K562 (cell line): ENCODE measurements at regions of chr1 and their contacts with region 1.

Region 1: GRCh38 chr1:212455803-212456528 is 23.2 kb downstream of the NENF start:
- DNase-seq: peak; percentile 87 to 91 (median 88)
- ATAC-seq: peak; percentile 87
- H3K4me3 ChIP-seq: no peak overlapping the region
- H3K27ac ChIP-seq: no peak overlapping the region
- H3K4me1 ChIP-seq: peaks cover 0 to 5% of the 10 kb centered on the region in 2 experiments; a peak in 2 of 5 replicates
- H3K27me3 ChIP-seq: peaks cover 0 to 4% of the 10 kb centered on the region in 2 experiments; a peak in 1 of 5 replicates
- CTCF ChIP-seq: peak; percentile 95 to 99 (median 99)
- EP300 ChIP-seq: no peak
- POLR2A ChIP-seq: no peak
- RAD21 ChIP-seq: peak; percentile 99 to 100

Region 2: DNA sequence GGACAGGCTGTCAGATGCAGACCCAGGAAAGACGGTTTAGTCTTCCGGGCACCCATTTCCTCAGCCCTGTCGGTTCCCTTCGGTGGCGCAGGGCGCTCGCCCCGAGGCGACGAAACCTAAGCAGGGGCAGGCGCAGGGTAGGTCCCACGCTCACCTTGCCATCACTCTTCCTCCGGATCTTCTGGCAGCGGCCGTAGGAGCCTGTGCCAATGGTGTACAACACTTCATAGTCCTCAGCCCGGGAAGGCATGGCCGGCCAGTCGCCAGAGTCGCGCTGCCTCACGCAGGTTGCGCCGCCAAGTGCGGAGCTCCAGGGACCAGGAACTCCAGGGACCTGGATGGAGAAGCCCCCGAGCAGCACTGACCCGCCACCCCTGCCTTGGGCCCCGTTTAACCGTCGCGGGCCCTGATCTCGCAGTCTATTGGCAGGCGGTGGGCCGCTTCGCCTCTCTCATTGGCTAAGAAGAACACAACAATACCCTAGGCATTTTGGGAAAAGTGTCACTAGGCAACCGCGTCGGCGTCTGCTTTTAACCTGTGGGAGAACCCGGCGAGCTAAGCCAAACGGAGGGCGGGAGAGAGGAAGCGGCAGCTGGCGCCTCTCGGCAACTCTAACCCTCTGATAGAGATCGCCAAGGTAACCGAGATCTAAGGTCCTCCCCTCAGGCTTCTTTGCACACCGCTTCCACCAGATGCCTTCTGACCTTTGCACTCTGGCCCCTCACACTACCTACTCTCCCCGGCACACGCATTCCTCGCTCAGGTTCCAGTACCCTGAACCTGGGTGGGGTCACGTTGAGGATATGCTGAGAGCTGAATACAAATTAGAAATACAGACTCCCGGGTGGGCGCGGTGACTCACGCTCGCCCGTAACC is 780.5 kb before region 1 on chr1 and contains the start of gene NEK2:
- CTCF ChIA-PET with region 1: interaction called, 15 read pairs
- POLR2A ChIA-PET with region 1: interaction called, 10 read pairs
- in situ Hi-C with region 1: loop called (anchors 5 kb)
- intact Hi-C with region 1: loop called (anchors 1 kb)
- DNase-seq: peak; percentile 95 to 99 (median 95)
- ATAC-seq: peak; percentile 97
- H3K4me3 ChIP-seq: peak within 1 kb of the TSS; percentile 75
- H3K27ac ChIP-seq: peak within 1 kb of the TSS; percentile 88
- H3K4me1 ChIP-seq: peaks cover 10 to 16% of the 10 kb centered on the region in 2 experiments; a peak in 4 of 5 replicates
- H3K27me3 ChIP-seq: no peaks in the 10 kb centered on the region
- CTCF ChIP-seq: no peak
- EP300 ChIP-seq: peak; percentile 19; the same call in 1 of the 2 replicates
- POLR2A ChIP-seq: peak; percentile 90
- RAD21 ChIP-seq: 0 out of 4 replicates have a peak, but pooled peaks have one; percentile 9 to 17
- polyA plus RNA-seq, gene NEK2: 30.0 to 38.6 TPM

Region 3: GRCh38 chr1:211698161-211699026 is 757.6 kb before region 1 on chr1:
- CTCF ChIA-PET with region 1: no interaction called
- POLR2A ChIA-PET with region 1: no interaction called
- in situ Hi-C with region 1: no loop called
- intact Hi-C with region 1: loop called (anchors 5 kb)
- DNase-seq: peak; percentile 90 to 94 (median 92)
- ATAC-seq: peak; percentile 97
- H3K4me3 ChIP-seq: no peak overlapping the region
- H3K27ac ChIP-seq: no peak overlapping the region
- H3K4me1 ChIP-seq: peaks cover 12 to 13% of the 10 kb centered on the region in 2 experiments; a peak in 4 of 5 replicates
- H3K27me3 ChIP-seq: peaks cover 0 to 7% of the 10 kb centered on the region in 2 experiments; a peak in 1 of 5 replicates
- CTCF ChIP-seq: peak; percentile 99 to 100 (median 100)
- EP300 ChIP-seq: peak; percentile 31; the same call in 1 of the 2 replicates
- POLR2A ChIP-seq: no peak
- RAD21 ChIP-seq: peak; percentile 99

Region 4: DNA sequence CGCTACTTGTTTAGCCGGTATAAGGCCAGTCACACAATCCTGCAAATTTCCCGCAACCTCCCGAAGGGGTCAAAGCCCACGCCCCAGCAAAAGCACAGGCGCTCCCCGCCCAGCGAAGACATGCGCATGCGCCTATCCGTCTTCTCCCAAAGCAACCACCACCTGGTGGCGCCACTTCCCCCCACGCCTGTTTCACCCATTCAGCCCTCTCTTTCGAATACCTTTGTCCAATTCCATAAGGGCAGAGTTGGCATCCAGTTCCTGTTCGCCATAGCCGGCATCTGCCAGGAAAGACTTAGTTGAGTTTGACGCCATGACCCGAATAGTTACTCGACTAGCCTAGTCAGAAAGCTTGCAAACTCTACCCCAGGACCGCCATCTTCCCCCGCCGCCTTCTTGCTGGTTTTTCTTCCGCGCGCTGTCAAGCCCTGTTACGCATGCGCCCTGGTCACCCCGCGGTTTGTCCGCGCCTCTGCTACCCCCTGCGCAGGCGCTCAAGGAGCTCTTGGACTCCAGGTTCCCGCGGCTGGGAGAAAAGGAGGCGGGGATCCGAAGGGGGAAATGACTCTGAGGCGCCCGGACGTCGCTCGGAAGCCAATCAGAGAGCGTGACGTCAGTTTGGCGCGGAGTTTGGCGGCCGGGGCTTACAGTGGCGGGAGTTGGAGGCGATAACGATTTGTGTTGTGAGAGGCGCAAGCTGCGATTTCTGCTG is 420.7 kb before region 1 on chr1 and contains the starts of genes DTL and INTS7:
- CTCF ChIA-PET with region 1: no interaction called
- POLR2A ChIA-PET with region 1: interaction called, 12 read pairs
- in situ Hi-C with region 1: no loop called
- intact Hi-C with region 1: no loop called
- DNase-seq: peak; percentile 98 to 100 (median 100)
- ATAC-seq: peak; percentile 86
- H3K4me3 ChIP-seq: peak within 1 kb of the TSS; percentile 74
- H3K27ac ChIP-seq: peak within 1 kb of the TSS; percentile 96
- H3K4me1 ChIP-seq: peaks cover 4 to 34% of the 10 kb centered on the region in 2 experiments; a peak in 4 of 5 replicates
- H3K27me3 ChIP-seq: no peaks in the 10 kb centered on the region
- CTCF ChIP-seq: peak; percentile 64 to 100 (median 80); a peak in 5 of 6 replicates
- EP300 ChIP-seq: no peak
- POLR2A ChIP-seq: peak; percentile 99
- RAD21 ChIP-seq: no peak; a peak in 1 of 4 replicates
- polyA plus RNA-seq, gene DTL: 38.3 to 66.7 TPM
- polyA plus RNA-seq, gene INTS7: 36.5 to 57.0 TPM

Region 5: GRCh38 chr1:212070720-212071302 is 385.2 kb before region 1 on chr1:
- CTCF ChIA-PET with region 1: interaction called, 45 read pairs
- POLR2A ChIA-PET with region 1: interaction called, 5 read pairs
- in situ Hi-C with region 1: loop called (anchors 5 kb)
- intact Hi-C with region 1: loop called (anchors 2 kb)
- DNase-seq: peak in 2 of 4 experiments; percentile 37 to 47
- ATAC-seq: peak; percentile 86
- H3K4me3 ChIP-seq: no peak overlapping the region
- H3K27ac ChIP-seq: no peak overlapping the region
- H3K4me1 ChIP-seq: no peaks in the 10 kb centered on the region
- H3K27me3 ChIP-seq: no peaks in the 10 kb centered on the region
- CTCF ChIP-seq: peak; percentile 44 to 90 (median 48); a peak in 4 of 6 replicates
- EP300 ChIP-seq: no peak
- POLR2A ChIP-seq: no peak
- RAD21 ChIP-seq: peak; percentile 95 to 99

Region 6: GRCh38 chr1:212368073-212368484 is 87.9 kb before region 1 on chr1:
- CTCF ChIA-PET with region 1: no interaction called
- POLR2A ChIA-PET with region 1: no interaction called
- in situ Hi-C with region 1: no loop called
- intact Hi-C with region 1: loop called (anchors 5 kb)
- DNase-seq: peak; percentile 68 to 83 (median 71)
- ATAC-seq: peak; percentile 98
- H3K4me3 ChIP-seq: no peak overlapping the region
- H3K27ac ChIP-seq: no peak overlapping the region
- H3K4me1 ChIP-seq: no peaks in the 10 kb centered on the region
- H3K27me3 ChIP-seq: no peaks in the 10 kb centered on the region
- CTCF ChIP-seq: peak; percentile 82 to 85 (median 83)
- EP300 ChIP-seq: no peak
- POLR2A ChIP-seq: no peak
- RAD21 ChIP-seq: peak; percentile 45 to 90

Region 7: DNA sequence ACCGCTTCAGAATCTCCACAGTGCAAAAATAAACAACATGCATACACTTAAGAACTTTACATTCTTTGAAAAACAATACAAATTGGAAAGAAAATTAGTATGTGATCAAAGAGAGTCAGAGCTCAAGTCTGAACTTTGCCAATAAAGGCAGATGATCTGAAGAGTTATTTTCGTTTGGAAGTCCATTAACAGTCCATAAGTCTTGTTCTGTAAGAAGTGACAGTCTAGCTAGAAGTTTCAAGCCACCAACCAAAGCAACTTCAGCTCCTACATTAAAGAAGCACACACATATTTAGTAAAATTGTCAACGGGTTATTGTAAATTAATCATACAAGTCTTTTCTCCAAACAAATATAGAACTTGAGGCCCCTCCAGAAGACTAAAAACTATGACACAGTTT is 539.0 kb after region 1 on chr1:
- CTCF ChIA-PET with region 1: interaction called, 4 read pairs
- POLR2A ChIA-PET with region 1: no interaction called
- in situ Hi-C with region 1: no loop called
- intact Hi-C with region 1: loop called (anchors 2 kb)
- DNase-seq: no peak
- ATAC-seq: no peak
- H3K4me3 ChIP-seq: no peak overlapping the region
- H3K27ac ChIP-seq: no peak overlapping the region
- H3K4me1 ChIP-seq: no peaks in the 10 kb centered on the region
- H3K27me3 ChIP-seq: no peaks in the 10 kb centered on the region
- CTCF ChIP-seq: no peak
- EP300 ChIP-seq: no peak
- POLR2A ChIP-seq: no peak
- RAD21 ChIP-seq: no peak